ENCODE measurements at regions of chr13 and their contacts with region 1.

Region 1: DNA sequence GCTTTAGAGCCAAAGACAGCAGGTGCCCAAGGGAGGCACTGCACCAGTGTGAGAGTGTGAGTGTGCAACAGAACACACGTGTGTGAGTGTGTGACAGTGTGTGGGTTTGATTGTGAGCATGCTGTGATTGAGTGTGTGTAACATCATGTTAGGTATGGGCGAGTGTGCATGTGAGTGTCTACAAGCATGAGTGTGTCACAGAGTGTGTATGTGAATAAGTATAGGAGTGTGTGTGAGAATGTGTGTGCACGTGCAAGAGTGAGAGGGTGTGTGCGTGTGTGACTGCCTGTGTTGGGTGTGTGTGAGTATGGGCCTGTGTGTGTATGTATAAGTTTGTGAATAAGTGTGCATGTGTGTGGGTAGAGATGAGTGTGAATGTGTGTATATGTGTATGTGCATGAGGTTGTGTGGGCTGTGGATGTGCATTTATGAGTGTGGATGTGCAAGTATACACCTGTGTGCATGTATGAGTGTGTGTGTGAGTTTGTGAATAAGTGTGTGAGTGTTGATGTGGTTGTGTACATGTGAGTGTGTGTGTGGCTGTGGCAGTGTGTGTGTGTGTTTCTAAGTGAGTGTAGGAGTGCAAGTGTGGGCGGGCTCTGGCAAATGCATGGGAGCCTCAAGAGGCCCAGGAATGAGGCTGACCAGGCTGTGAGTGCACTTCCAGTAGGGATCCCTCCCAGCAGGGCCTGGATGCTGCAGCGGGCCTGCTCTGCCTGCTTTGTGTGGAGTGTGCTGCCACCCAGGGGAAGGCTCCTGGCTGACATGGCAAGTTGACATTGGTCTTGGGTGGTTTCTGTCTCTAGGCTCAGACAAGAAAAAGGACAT is 198.4 kb downstream of the COL4A1 start:
- DNase-seq: peak; percentile 80
- ATAC-seq: peak; percentile 91
- H3K4me3 ChIP-seq: no peak overlapping the region
- H3K27ac ChIP-seq: no peak overlapping the region
- H3K4me1 ChIP-seq: peaks cover 14% of the 10 kb centered on the region
- H3K27me3 ChIP-seq: no peaks in the 10 kb centered on the region
- CTCF ChIP-seq: peak; percentile 78

Region 2: DNA sequence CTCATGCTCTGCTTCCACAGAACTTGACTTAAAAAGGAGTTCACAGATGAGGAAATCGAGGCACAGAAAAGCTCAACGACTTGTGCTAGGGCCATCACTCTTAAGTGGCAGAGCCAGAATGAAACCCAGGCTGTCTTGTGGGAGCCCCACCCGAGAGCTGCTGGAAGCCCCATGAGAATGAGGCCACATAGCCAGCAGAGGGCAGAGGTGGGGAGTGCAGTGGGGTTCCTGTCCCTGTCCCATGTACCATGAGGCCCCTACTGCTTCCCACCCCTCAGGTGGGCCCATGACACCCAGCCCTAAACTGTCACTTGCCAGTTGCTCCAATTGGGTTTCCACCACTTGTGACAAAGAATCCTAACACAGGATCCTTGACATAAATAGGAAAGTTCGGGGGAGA is 498.0 kb before region 1 on chr13:
- CTCF ChIA-PET with region 1: no interaction called
- POLR2A ChIA-PET with region 1: no interaction called
- intact Hi-C with region 1: loop called (anchors 5 kb)
- DNase-seq: peak; percentile 25
- ATAC-seq: peak; percentile 61; the same call in 1 of the 2 replicates
- H3K4me3 ChIP-seq: no peak overlapping the region
- H3K27ac ChIP-seq: no peak overlapping the region
- H3K4me1 ChIP-seq: peaks cover 14% of the 10 kb centered on the region; the same call in 1 of the 2 replicates
- H3K27me3 ChIP-seq: no peaks in the 10 kb centered on the region
- CTCF ChIP-seq: peak; percentile 56

Region 3: GRCh38 chr13:109862627-109863026 is 245.9 kb before region 1 on chr13:
- CTCF ChIA-PET with region 1: no interaction called
- POLR2A ChIA-PET with region 1: no interaction called
- intact Hi-C with region 1: loop called (anchors 5 kb)
- DNase-seq: peak; percentile 89
- ATAC-seq: peak; percentile 91
- H3K4me3 ChIP-seq: peak overlapping the region; percentile 32; the same call in 1 of the 2 replicates
- H3K27ac ChIP-seq: peak overlapping the region; percentile 44
- H3K4me1 ChIP-seq: peaks cover 24% of the 10 kb centered on the region
- H3K27me3 ChIP-seq: no peaks in the 10 kb centered on the region
- CTCF ChIP-seq: no peak

Region 4: DNA sequence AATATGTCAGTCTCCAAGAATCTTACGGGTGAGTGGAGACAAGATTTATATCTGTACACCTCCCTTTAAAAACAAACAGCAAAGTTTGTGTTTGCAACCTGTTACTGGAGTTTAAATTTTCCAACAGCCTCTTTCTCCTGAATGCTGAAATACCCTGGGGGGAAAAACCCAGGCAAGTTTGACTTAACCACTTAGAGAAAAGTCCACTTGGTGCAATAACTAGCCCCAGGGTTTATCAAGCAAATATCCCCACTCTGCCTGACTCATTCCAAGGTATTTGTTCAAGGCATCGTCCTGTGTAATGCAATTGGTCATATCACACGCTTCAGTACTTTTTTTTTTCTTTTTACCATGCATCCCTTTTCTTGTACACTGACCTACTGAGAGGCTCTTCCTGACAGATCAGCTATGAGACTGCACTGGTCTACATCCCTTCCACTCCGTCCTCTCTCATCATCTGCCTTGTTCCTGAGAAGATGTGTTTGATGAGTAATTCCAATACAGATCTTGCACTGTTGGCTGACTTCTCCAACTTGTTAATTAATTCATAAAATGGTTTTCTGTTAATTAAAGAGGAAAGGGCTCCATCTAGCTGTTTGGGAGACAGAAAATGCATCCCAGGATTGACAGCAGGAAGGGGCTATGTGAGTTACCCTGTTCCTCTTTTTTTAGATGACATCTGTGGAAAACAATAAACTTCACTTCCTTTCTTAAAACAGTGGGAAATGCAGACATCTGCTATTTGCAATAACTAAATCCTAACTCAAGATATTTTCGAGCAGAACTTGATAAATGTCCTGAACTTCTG is 109.6 kb before region 1 on chr13:
- CTCF ChIA-PET with region 1: no interaction called
- POLR2A ChIA-PET with region 1: no interaction called
- intact Hi-C with region 1: loop called (anchors 5 kb)
- DNase-seq: peak; percentile 97
- ATAC-seq: peak; percentile 85
- H3K4me3 ChIP-seq: no peak overlapping the region
- H3K27ac ChIP-seq: peak overlapping the region; percentile 74
- H3K4me1 ChIP-seq: peaks cover 52% of the 10 kb centered on the region
- H3K27me3 ChIP-seq: no peaks in the 10 kb centered on the region
- CTCF ChIP-seq: 0 out of 2 replicates have a peak, but pooled peaks have one; percentile 30